ENCODE measurements at regions of chr4 and their contacts with region 1.

Region 1: DNA sequence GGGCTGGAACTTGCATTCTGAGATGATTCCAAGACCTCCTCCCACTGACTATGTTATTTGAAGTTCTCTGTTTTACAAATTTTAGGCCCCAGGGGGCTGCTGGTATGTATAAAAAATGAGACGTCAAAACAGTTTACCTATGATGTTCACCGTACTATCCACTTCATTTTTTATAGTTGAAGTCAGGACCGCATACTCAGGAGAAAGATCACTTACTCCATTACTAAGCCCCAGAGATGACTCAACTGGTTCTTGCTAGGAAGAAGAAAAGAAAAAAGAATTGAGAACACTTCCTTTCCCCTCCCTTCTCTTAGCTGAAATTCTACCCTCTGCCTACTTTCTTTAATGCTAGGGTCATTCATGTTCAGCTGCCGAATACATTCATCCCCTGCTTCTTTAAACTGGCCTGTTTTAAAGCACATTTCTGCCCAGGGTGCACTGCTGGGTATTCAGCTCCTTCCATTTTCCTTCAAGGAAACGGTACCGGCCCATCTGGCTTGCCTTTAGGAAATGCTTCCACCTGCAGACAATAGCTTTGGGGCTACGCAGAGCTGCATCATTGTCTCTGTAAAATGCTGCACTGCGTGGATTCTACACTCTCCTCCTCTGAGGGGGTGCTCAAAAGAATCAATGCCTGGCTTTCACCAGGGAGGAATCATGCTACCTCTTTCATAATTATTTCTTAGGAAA is 66.2 kb downstream of the IRF2 start:
- DNase-seq: peak; percentile 60
- H3K4me3 ChIP-seq: no peak overlapping the region
- H3K27ac ChIP-seq: peak overlapping the region; percentile 31
- H3K4me1 ChIP-seq: peaks cover 19% of the 10 kb centered on the region
- H3K27me3 ChIP-seq: no peaks in the 10 kb centered on the region
- CTCF ChIP-seq: no peak

Region 2: GRCh38 chr4:184474263-184475095 is 66.3 kb after region 1 on chr4 and contains the start of gene IRF2:
- CTCF ChIA-PET with region 1: no interaction called
- POLR2A ChIA-PET with region 1: no interaction called
- intact Hi-C with region 1: no loop called
- DNase-seq: peak; percentile 99
- H3K4me3 ChIP-seq: peak within 1 kb of the TSS; percentile 91
- H3K27ac ChIP-seq: peak within 1 kb of the TSS; percentile 91
- H3K4me1 ChIP-seq: peaks cover 8% of the 10 kb centered on the region
- H3K27me3 ChIP-seq: no peaks in the 10 kb centered on the region
- CTCF ChIP-seq: no peak
- total RNA-seq, gene IRF2: 27.5 and 28.2 TPM in 2 replicates

Region 3: DNA sequence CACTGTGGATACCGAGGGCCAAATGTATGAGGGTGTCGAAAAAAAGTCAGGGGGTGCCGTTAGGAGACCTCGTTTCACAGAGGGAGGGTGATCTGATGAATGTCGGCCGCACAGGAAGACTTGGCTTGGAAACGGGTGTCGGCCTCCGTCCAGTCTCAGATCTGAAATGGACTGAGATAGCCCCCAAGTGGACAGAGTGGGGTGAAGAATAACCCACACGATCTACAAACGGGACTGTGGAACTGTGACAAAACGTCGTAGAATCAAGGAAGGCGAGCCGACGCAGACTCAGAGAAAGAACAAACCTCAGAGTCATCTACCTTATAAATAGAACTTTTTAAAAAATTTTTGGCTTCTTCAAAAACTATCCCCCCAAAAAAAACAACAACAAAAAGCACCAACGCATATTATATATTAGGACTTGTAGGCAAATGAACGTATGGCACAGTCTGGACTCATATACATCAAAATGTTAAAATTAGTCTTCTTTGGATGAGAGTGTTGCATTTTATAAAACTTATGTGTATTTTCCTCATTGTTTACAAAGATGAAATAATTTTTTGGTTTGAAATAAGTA is 129.9 kb after region 1 on chr4:
- CTCF ChIA-PET with region 1: no interaction called
- POLR2A ChIA-PET with region 1: interaction called, 15 read pairs
- intact Hi-C with region 1: no loop called
- DNase-seq: peak; percentile 90
- H3K4me3 ChIP-seq: peak overlapping the region; percentile 78
- H3K27ac ChIP-seq: peak overlapping the region; percentile 92
- H3K4me1 ChIP-seq: peaks cover 20% of the 10 kb centered on the region
- H3K27me3 ChIP-seq: no peaks in the 10 kb centered on the region
- CTCF ChIP-seq: peak; percentile 65

Measured in A673 (cell line).